CD8-positive, alpha-beta T cell (primary cell): ENCODE measurements at regions of chr7 and their contacts with region 1.

Region 1: DNA sequence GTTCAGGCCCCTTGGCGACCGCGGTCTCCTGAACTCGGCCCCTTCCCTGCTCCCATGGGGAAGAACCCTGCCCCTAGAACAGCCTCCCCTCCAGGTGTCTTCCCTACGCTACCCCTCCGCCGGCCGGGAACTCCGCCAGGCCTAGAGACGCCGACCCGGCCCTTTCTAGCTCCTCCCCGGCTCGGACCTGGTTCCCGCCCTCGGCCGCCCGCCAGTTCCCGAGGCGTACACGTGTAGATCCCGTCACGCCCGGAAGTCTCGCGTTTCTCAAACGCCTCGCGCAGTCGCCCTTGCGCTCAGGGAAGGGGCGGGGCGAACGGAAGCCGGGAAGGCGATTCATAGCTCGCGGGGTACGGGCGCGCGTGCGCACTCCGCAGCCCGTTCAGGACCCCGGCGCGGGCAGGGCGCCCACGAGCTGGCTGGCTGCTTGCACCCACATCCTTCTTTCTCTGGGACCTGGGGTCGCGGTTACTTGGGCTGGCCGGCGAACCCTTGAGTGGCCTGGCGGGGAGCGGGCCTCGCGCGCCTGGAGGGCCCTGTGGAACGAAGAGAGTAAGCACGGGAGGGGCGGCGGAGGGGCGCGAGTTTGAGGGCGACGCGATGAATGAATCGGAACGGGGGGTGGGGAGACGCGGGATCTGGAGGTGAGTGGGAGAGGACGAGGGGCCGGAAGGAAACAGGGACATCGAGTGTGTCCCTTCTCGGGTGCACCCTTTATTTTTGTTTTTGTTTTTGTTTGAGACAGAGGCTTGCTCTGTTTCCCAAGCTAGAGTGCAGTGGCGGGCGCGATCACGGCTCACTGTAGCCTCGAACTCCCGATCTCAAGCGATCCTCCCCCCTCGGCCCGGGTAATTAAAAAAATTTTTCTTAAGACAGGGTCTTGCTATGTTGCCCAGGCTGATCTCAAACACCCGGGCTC is at the start of gene POP7:
- DNase-seq: peak; percentile 93 to 99 (median 98)
- ATAC-seq: peak; percentile 95
- H3K4me3 ChIP-seq: peak within 1 kb of the TSS; percentile 80 to 94
- H3K4me3 Mint-ChIP-seq: peak within 1 kb of the TSS; percentile 96
- H3K27ac ChIP-seq: peak within 1 kb of the TSS; percentile 53 to 82
- H3K27ac Mint-ChIP-seq: peak within 1 kb of the TSS; percentile 94
- H3K4me1 ChIP-seq: peaks cover 16% of the 10 kb centered on the region
- H3K4me1 Mint-ChIP-seq: peaks cover 19% of the 10 kb centered on the region
- H3K27me3 ChIP-seq: no peaks in the 10 kb centered on the region
- H3K27me3 Mint-ChIP-seq: peaks cover 2% of the 10 kb centered on the region
- CTCF ChIP-seq: no peak
- total RNA-seq, gene POP7: 9.3 to 11.0 TPM

Region 2: DNA sequence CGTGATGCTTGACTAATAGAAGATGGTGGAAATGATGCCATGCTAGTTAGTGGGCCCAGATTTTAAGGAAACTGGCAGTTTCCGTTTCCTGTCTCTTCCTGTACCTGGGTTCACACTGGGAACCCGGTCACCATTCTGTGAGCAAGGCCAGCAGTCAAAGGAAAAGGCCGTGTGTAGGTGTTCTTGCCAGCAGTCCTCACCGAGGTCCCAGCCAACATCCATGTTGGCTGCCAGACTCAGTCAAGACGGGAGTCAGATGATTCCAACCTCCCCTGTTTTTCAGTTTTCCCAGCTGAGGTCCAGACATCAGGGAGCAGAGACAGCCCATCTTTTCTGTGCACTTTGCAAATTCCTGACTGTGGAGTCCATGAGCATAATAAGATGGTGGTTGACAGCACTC is 363.2 kb before region 1 on chr7:
- CTCF ChIA-PET with region 1: no interaction called
- POLR2A ChIA-PET with region 1: no interaction called
- intact Hi-C with region 1: loop called in 1 of 2 experiments (anchors 10 kb)
- DNase-seq: no peak
- ATAC-seq: no peak
- H3K4me3 ChIP-seq: no peak overlapping the region
- H3K4me3 Mint-ChIP-seq: no peak overlapping the region
- H3K27ac ChIP-seq: peak overlapping the region in 1 of 2 experiments; percentile 28
- H3K27ac Mint-ChIP-seq: peak overlapping the region; percentile 77
- H3K4me1 ChIP-seq: peaks cover 9% of the 10 kb centered on the region
- H3K4me1 Mint-ChIP-seq: peaks cover 23% of the 10 kb centered on the region
- H3K27me3 ChIP-seq: no peaks in the 10 kb centered on the region
- H3K27me3 Mint-ChIP-seq: no peaks in the 10 kb centered on the region
- CTCF ChIP-seq: no peak

Region 3: DNA sequence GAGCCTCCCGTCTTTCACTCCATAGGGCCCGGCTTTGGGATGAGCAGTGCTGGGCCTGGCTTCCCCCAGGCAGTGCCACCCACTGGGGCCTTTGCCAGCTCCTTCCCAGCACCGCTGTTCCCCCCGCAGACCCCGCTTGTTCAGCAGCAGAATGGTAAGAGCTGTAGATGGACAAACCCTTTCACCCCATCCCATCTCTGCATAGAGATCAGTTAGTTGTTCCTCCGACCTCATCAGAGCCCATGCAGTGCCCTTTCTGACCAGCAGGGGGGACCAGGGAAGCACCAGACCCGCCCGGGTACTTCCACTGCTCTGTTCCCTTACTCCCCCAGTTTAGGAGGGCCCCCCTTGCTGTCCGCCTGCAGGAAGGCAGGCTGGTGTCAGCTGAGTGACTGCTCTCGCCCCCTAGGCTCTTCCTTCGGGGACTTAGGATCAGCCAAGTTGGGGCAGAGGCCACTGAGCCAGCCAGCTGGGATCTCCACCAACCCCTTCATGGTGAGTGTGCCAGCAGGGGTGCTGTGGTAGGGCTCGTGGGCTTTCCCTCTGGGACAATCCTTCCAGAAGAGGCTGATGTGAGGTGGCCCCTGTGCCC is 142.1 kb before region 1 on chr7:
- CTCF ChIA-PET with region 1: interaction called, 21 read pairs
- POLR2A ChIA-PET with region 1: interaction called, 3 read pairs
- intact Hi-C with region 1: no loop called
- DNase-seq: peak; percentile 76 to 93 (median 82)
- ATAC-seq: peak; percentile 83
- H3K4me3 ChIP-seq: no peak overlapping the region
- H3K4me3 Mint-ChIP-seq: no peak overlapping the region
- H3K27ac ChIP-seq: no peak overlapping the region
- H3K27ac Mint-ChIP-seq: no peak overlapping the region
- H3K4me1 ChIP-seq: peaks cover 31% of the 10 kb centered on the region
- H3K4me1 Mint-ChIP-seq: peaks cover 30% of the 10 kb centered on the region
- H3K27me3 ChIP-seq: no peaks in the 10 kb centered on the region
- H3K27me3 Mint-ChIP-seq: no peaks in the 10 kb centered on the region
- CTCF ChIP-seq: peak; percentile 85

Region 4: DNA sequence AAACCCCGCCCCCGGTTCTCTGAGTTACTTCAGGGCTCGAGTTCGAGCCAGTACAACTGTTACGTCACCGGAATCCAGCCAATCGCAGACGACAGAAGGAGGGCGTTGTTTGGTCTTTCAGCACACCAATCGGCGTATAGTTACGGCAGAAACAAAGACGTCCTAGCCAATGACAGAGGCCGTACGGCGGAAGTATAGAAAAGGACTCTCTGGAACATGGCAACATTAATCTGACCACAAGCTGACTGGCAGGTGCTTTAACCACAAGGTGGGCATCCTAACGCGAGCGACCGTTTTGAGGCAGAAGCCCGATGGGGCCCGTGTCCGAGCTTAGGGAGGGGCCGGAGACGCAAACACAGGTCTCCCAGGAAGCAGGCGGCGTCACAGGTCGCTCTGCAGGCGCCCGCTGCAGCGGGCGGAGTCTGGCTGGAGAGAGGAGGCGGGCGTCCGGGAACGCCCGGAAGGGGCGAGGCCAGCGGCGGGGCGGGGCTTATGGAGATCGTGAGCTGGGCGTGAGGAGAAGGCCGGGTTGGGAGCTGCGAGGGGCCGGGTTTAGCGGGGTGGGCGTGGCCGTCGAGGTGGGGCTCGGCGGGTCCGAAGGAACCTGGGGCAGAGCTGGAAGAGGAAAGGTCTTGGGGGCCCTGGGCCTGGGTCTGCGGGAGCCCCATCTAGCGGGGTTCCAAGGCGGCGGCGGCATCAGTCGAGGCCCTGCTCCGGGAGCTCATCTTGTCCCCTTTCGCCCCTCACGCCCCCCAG is 93.9 kb before region 1 on chr7 and contains the start of gene MOSPD3:
- CTCF ChIA-PET with region 1: interaction called, 14 read pairs
- POLR2A ChIA-PET with region 1: interaction called, 7 read pairs
- intact Hi-C with region 1: loop called in 1 of 2 experiments (anchors 5 kb)
- DNase-seq: peak; percentile 96 to 100 (median 98)
- ATAC-seq: peak; percentile 89
- H3K4me3 ChIP-seq: peak within 1 kb of the TSS; percentile 68 to 96
- H3K4me3 Mint-ChIP-seq: peak within 1 kb of the TSS; percentile 99
- H3K27ac ChIP-seq: peak within 1 kb of the TSS; percentile 93 to 98
- H3K27ac Mint-ChIP-seq: peak within 1 kb of the TSS; percentile 100
- H3K4me1 ChIP-seq: peaks cover 19% of the 10 kb centered on the region
- H3K4me1 Mint-ChIP-seq: peaks cover 24% of the 10 kb centered on the region
- H3K27me3 ChIP-seq: no peaks in the 10 kb centered on the region
- H3K27me3 Mint-ChIP-seq: no peaks in the 10 kb centered on the region
- CTCF ChIP-seq: no peak
- total RNA-seq, gene MOSPD3: 10.3 to 10.5 TPM

Region 5: GRCh38 chr7:100673300-100673941 is 32.6 kb before region 1 on chr7 and contains the start of gene GNB2:
- CTCF ChIA-PET with region 1: interaction called, 12 read pairs
- POLR2A ChIA-PET with region 1: interaction called, 5 read pairs
- intact Hi-C with region 1: loop called in 1 of 2 experiments (anchors 1 kb)
- DNase-seq: peak; percentile 90 to 98 (median 96)
- ATAC-seq: peak; percentile 53
- H3K4me3 ChIP-seq: peak within 1 kb of the TSS; percentile 89 to 99
- H3K4me3 Mint-ChIP-seq: peak within 1 kb of the TSS; percentile 91
- H3K27ac ChIP-seq: peak within 1 kb of the TSS; percentile 80 to 98
- H3K27ac Mint-ChIP-seq: peak within 1 kb of the TSS; percentile 93
- H3K4me1 ChIP-seq: peaks cover 13% of the 10 kb centered on the region
- H3K4me1 Mint-ChIP-seq: peaks cover 23% of the 10 kb centered on the region
- H3K27me3 ChIP-seq: no peaks in the 10 kb centered on the region
- H3K27me3 Mint-ChIP-seq: no peaks in the 10 kb centered on the region
- CTCF ChIP-seq: no peak
- total RNA-seq, gene GNB2: 69.4 to 69.6 TPM

Region 6: DNA sequence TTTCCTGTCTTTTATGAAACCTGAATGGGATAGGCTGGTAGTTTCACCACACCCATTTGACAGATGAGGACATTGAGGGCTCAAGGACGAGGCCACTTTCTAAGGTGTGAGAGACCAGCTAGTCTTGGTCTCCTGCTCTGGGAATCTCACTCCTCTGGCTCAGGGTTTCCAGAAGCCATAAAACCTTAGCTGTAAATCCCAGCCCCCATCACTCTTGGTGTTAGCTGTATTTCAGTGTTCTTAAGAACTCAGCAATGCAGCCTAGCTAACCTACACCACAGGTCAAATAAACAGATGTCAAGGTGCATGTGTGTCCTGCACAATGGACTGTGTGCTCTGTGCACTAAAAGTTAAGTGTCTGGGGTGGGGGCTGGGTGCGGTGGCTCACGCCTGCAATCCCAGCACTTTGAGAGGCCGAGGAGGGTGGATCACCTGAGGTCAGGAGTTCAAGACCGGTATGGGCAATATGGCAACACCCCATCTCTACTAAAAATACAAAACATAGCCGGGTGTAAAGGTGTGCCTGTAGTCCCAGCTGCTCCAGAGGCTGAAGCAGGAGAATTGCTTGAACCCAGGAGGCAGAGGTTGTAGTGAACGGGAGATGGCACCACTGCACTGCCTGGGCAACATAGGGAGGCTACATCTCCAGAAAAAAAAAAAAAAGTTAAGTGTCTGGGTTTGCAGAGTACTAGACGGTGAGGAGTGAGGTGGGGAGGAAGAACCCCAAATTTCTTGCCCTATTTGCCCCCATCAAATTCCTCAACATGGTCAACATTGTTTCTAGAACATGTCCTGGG is 13.7 kb after region 1 on chr7:
- CTCF ChIA-PET with region 1: interaction called, 39 read pairs
- POLR2A ChIA-PET with region 1: no interaction called
- intact Hi-C with region 1: no loop called
- DNase-seq: no peak
- ATAC-seq: no peak
- H3K4me3 ChIP-seq: no peak overlapping the region
- H3K4me3 Mint-ChIP-seq: no peak overlapping the region
- H3K27ac ChIP-seq: no peak overlapping the region
- H3K27ac Mint-ChIP-seq: no peak overlapping the region
- H3K4me1 ChIP-seq: peaks cover 3% of the 10 kb centered on the region
- H3K4me1 Mint-ChIP-seq: peaks cover 3% of the 10 kb centered on the region
- H3K27me3 ChIP-seq: peaks cover 9% of the 10 kb centered on the region in 2 experiments
- H3K27me3 Mint-ChIP-seq: peaks cover 41% of the 10 kb centered on the region
- CTCF ChIP-seq: no peak

Region 7: GRCh38 chr7:100753750-100754149 is 47.7 kb after region 1 on chr7:
- CTCF ChIA-PET with region 1: no interaction called
- POLR2A ChIA-PET with region 1: no interaction called
- intact Hi-C with region 1: no loop called
- DNase-seq: no peak
- ATAC-seq: no peak
- H3K4me3 ChIP-seq: no peak overlapping the region
- H3K4me3 Mint-ChIP-seq: no peak overlapping the region
- H3K27ac ChIP-seq: no peak overlapping the region
- H3K27ac Mint-ChIP-seq: no peak overlapping the region
- H3K4me1 ChIP-seq: no peaks in the 10 kb centered on the region
- H3K4me1 Mint-ChIP-seq: no peaks in the 10 kb centered on the region
- H3K27me3 ChIP-seq: peaks cover 0 to 3% of the 10 kb centered on the region in 2 experiments
- H3K27me3 Mint-ChIP-seq: peaks cover 21% of the 10 kb centered on the region
- CTCF ChIP-seq: no peak

Region 8: GRCh38 chr7:100852048-100852872 is 146.2 kb after region 1 on chr7 and contains the start of gene SLC12A9:
- CTCF ChIA-PET with region 1: interaction called, 23 read pairs
- POLR2A ChIA-PET with region 1: interaction called, 20 read pairs
- intact Hi-C with region 1: loop called (anchors 1 kb)
- DNase-seq: peak; percentile 67 to 93 (median 85)
- ATAC-seq: peak; percentile 92
- H3K4me3 ChIP-seq: peak within 1 kb of the TSS; percentile 84 to 98
- H3K4me3 Mint-ChIP-seq: peak within 1 kb of the TSS; percentile 88
- H3K27ac ChIP-seq: peak within 1 kb of the TSS; percentile 42 to 64
- H3K27ac Mint-ChIP-seq: peak within 1 kb of the TSS; percentile 90
- H3K4me1 ChIP-seq: peaks cover 18% of the 10 kb centered on the region
- H3K4me1 Mint-ChIP-seq: peaks cover 20% of the 10 kb centered on the region
- H3K27me3 ChIP-seq: no peaks in the 10 kb centered on the region
- H3K27me3 Mint-ChIP-seq: no peaks in the 10 kb centered on the region
- CTCF ChIP-seq: peak; percentile 85
- total RNA-seq, gene SLC12A9: 23.4 to 26.6 TPM